ENCODE measurements at regions of chr5 and their contacts with region 1.

Region 1: GRCh38 chr5:110045158-110045557 is 355.4 kb downstream of the MAN2A1 start:
- DNase-seq: no peak
- ATAC-seq: peak; percentile 46; the same call in 1 of the 3 replicates
- H3K4me3 ChIP-seq: no peak overlapping the region
- H3K27ac ChIP-seq: no peak overlapping the region
- H3K4me1 ChIP-seq: no peaks in the 10 kb centered on the region
- H3K27me3 ChIP-seq: no peaks in the 10 kb centered on the region
- CTCF ChIP-seq: peak; percentile 20; the same call in 1 of the 2 replicates
- EP300 ChIP-seq: no peak
- POLR2A ChIP-seq: no peak
- RAD21 ChIP-seq: 0 out of 2 replicates have a peak, but pooled peaks have one; percentile 14

Region 2: GRCh38 chr5:109921735-109922380 is 123.3 kb before region 1 on chr5:
- CTCF ChIA-PET with region 1: no interaction called
- POLR2A ChIA-PET with region 1: no interaction called
- in situ Hi-C with region 1: no loop called
- intact Hi-C with region 1: no loop called
- DNase-seq: no peak
- ATAC-seq: peak; percentile 70
- H3K4me3 ChIP-seq: no peak overlapping the region
- H3K27ac ChIP-seq: no peak overlapping the region
- H3K4me1 ChIP-seq: peaks cover 14% of the 10 kb centered on the region
- H3K27me3 ChIP-seq: no peaks in the 10 kb centered on the region
- CTCF ChIP-seq: no peak
- EP300 ChIP-seq: no peak
- POLR2A ChIP-seq: no peak
- RAD21 ChIP-seq: no peak

Region 3: GRCh38 chr5:110087829-110088228 is 42.7 kb after region 1 on chr5:
- CTCF ChIA-PET with region 1: no interaction called
- POLR2A ChIA-PET with region 1: no interaction called
- in situ Hi-C with region 1: no loop called
- intact Hi-C with region 1: loop called (anchors 1 kb)
- DNase-seq: peak; percentile 38
- ATAC-seq: peak; percentile 54; the same call in 2 of the 3 replicates
- H3K4me3 ChIP-seq: no peak overlapping the region
- H3K27ac ChIP-seq: no peak overlapping the region
- H3K4me1 ChIP-seq: peaks cover 28% of the 10 kb centered on the region
- H3K27me3 ChIP-seq: no peaks in the 10 kb centered on the region
- CTCF ChIP-seq: no peak
- EP300 ChIP-seq: peak in 1 of 2 experiments; percentile 34; a peak in 1 of 4 replicates
- POLR2A ChIP-seq: no peak
- RAD21 ChIP-seq: no peak

Region 4: DNA sequence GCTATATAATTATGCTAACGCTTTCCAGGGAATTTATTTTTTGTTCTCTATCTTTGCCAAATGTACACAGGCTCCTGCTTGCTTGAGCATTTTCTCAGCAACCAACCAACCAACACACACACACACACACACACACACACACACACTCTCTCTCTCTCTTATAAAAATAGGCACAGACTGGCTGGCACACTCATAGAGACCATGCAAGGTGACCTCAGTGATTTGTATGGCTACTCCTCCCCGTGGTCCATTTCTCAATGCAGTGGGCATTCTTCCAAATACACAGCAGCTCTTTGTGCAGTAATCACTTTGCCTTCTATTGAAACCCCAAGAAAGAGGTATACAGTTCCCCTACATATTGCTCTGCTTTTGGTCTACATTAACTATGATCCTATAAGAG is 60.5 kb after region 1 on chr5:
- CTCF ChIA-PET with region 1: no interaction called
- POLR2A ChIA-PET with region 1: no interaction called
- in situ Hi-C with region 1: no loop called
- intact Hi-C with region 1: loop called (anchors 5 kb)
- DNase-seq: peak; percentile 79
- ATAC-seq: peak; percentile 63
- H3K4me3 ChIP-seq: no peak overlapping the region; a peak in 1 of 6 replicates
- H3K27ac ChIP-seq: no peak overlapping the region
- H3K4me1 ChIP-seq: peaks cover 65% of the 10 kb centered on the region
- H3K27me3 ChIP-seq: no peaks in the 10 kb centered on the region
- CTCF ChIP-seq: no peak
- EP300 ChIP-seq: no peak; a peak in 1 of 4 replicates
- POLR2A ChIP-seq: no peak
- RAD21 ChIP-seq: no peak

Region 5: DNA sequence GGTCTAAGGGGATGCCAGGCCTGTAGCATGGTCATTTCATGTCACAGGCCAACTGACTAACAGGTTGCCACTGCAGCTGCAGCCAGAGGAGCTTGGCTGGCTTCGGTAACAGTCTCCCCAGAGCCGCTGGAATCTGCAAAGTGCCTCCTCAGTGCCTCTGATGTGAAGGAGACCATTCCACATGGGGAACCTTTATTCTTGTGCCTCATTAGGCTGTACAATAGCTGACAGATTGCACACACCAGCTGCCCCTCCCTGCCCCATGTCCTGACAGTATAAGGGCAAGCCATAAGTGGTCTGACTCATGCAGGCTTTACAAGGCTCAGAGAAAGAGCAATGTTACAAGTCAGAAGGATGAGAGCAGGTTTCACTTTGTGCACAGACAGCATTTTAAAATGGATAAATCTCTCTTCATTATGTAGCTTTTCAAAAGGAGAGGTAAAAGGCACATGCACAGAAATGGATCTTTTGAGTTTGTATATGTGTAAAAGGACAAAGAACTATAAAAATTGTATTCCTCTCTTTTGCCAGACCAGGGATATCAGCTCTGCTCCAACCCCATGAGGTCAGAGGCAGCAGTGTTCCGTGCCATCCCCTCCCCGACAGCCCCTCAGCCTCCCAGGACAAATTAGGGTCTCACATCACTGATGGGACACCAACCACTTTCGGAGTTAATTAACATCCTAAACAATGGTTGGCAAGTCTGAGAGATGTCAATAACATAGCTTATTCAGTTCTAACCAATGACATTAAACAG is 213.5 kb after region 1 on chr5:
- CTCF ChIA-PET with region 1: no interaction called
- POLR2A ChIA-PET with region 1: no interaction called
- in situ Hi-C with region 1: no loop called
- intact Hi-C with region 1: no loop called
- DNase-seq: no peak
- ATAC-seq: peak; percentile 71
- H3K4me3 ChIP-seq: no peak overlapping the region
- H3K27ac ChIP-seq: no peak overlapping the region
- H3K4me1 ChIP-seq: no peaks in the 10 kb centered on the region
- H3K27me3 ChIP-seq: peaks cover 0 to 3% of the 10 kb centered on the region in 2 experiments; a peak in 2 of 5 replicates
- CTCF ChIP-seq: no peak
- EP300 ChIP-seq: no peak
- POLR2A ChIP-seq: no peak
- RAD21 ChIP-seq: no peak

Region 6: GRCh38 chr5:110333384-110333783 is 288.2 kb after region 1 on chr5:
- CTCF ChIA-PET with region 1: no interaction called
- POLR2A ChIA-PET with region 1: no interaction called
- in situ Hi-C with region 1: no loop called
- intact Hi-C with region 1: loop called (anchors 10 kb)
- DNase-seq: peak; percentile 24
- ATAC-seq: peak; percentile 61; the same call in 2 of the 3 replicates
- H3K4me3 ChIP-seq: no peak overlapping the region
- H3K27ac ChIP-seq: no peak overlapping the region
- H3K4me1 ChIP-seq: no peaks in the 10 kb centered on the region; the same call in 1 of the 2 replicates
- H3K27me3 ChIP-seq: no peaks in the 10 kb centered on the region
- CTCF ChIP-seq: peak; percentile 62
- EP300 ChIP-seq: no peak
- POLR2A ChIP-seq: no peak
- RAD21 ChIP-seq: no peak

Region 7: GRCh38 chr5:110414360-110414759 is 369.2 kb after region 1 on chr5:
- CTCF ChIA-PET with region 1: no interaction called
- POLR2A ChIA-PET with region 1: no interaction called
- in situ Hi-C with region 1: no loop called
- intact Hi-C with region 1: loop called (anchors 10 kb)
- DNase-seq: peak; percentile 8
- ATAC-seq: no peak
- H3K4me3 ChIP-seq: no peak overlapping the region
- H3K27ac ChIP-seq: no peak overlapping the region
- H3K4me1 ChIP-seq: no peaks in the 10 kb centered on the region
- H3K27me3 ChIP-seq: no peaks in the 10 kb centered on the region
- CTCF ChIP-seq: peak; percentile 20; the same call in 1 of the 2 replicates
- EP300 ChIP-seq: no peak
- POLR2A ChIP-seq: no peak
- RAD21 ChIP-seq: no peak